Activated CD4-positive, alpha-beta T cell treated with anti-CD3 and anti-CD28 coated beads for 36 hours (primary cell): ENCODE measurements at regions of chr20 and their contacts with region 1.

Region 1: GRCh38 chr20:47725248-47725973 is 59.9 kb downstream of the SULF2 start:
- DNase-seq: peak; percentile 90
- ATAC-seq: peak; percentile 72
- H3K4me3 Mint-ChIP-seq: no peak overlapping the region
- H3K27ac Mint-ChIP-seq: peak overlapping the region; percentile 63
- H3K4me1 Mint-ChIP-seq: peaks cover 29% of the 10 kb centered on the region
- H3K27me3 Mint-ChIP-seq: no peaks in the 10 kb centered on the region

Region 2: DNA sequence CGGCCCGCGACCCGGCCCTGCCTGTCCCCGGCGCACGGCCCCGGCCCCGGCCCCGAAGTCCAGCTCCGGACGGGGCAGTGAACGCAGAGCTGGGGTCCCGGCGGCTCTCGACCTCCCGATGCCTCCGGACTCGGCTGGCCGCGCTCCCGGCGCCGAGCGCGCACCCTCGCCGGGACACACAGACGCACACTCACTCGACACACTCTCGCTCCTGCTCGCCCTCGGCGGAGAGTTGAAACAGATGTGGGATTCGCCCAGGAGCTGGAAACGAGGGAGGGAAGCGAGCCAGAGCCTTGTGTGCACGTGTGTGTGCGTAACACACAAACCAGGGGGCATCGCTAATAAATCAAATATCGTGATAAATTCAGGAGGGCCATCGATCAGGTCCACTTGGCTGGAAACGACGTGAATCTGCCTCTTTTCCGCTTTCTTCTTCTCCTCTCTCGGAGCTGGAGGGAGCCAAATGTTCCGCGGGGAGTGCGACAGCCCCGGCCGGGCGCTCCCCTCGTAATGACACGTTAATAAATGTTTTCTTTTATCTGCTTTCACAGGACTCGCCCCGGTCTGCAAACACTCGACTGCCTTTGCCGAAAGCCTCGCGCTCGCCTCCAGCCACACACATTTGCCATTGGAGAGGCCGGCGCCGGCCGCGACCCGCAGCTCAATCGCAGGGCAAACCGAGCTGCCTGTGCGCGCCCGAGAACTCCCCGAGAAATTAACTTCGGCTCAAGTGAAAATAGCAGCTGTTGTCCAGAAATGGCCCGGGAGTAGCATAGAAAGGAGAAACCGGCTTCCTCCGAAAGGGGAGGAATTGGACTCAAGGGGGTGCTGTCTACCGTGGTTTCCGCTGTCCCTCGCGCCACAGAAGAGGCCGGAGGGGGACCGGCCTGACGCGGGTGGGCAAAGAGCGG is 60.7 kb after region 1 on chr20:
- CTCF ChIA-PET with region 1: no interaction called
- POLR2A ChIA-PET with region 1: no interaction called
- intact Hi-C with region 1: loop called in 1 of 2 experiments (anchors 5 kb)
- DNase-seq: peak; percentile 36
- ATAC-seq: peak; percentile 42
- H3K4me3 Mint-ChIP-seq: peak overlapping the region; percentile 51
- H3K27ac Mint-ChIP-seq: no peak overlapping the region
- H3K4me1 Mint-ChIP-seq: peaks cover 10% of the 10 kb centered on the region
- H3K27me3 Mint-ChIP-seq: peaks cover 56% of the 10 kb centered on the region

Region 3: DNA sequence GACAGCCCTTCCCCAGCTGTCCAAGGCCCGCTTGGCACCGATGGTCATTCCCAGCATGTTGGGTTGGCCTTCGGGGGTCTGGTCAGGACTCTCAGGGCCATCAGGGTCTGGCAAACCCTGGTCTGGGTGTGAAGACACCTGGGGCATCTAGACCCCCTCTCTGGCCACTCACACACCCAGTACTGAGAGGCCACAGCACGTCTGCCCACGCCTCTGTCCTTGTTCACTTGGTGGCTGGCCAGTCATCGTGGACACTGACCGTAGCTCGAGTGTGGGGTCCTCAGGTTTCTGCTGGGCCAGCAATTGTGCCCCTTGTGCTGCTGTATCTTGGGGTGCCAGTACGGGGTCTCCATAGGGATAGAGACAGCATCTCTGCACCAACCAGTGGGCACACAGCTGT is 113.8 kb after region 1 on chr20:
- CTCF ChIA-PET with region 1: no interaction called
- POLR2A ChIA-PET with region 1: no interaction called
- intact Hi-C with region 1: no loop called
- DNase-seq: no peak
- ATAC-seq: no peak
- H3K4me3 Mint-ChIP-seq: no peak overlapping the region
- H3K27ac Mint-ChIP-seq: no peak overlapping the region
- H3K4me1 Mint-ChIP-seq: no peaks in the 10 kb centered on the region
- H3K27me3 Mint-ChIP-seq: no peaks in the 10 kb centered on the region